Mammary epithelial cell (primary cell): ENCODE measurements at regions of chr18 and their contacts with region 1.

Region 1: GRCh38 chr18:21242141-21242779 is at the start of gene GREB1L:
- DNase-seq: peak; percentile 76
- H3K4me3 ChIP-seq: peak within 1 kb of the TSS; percentile 64 to 67 (median 65)
- H3K27ac ChIP-seq: no peak within 1 kb of the TSS
- H3K4me1 ChIP-seq: peaks cover 6% of the 10 kb centered on the region
- H3K27me3 ChIP-seq: peaks cover 19% of the 10 kb centered on the region
- CTCF ChIP-seq: peak in 1 of 2 donors; percentile 33
- total RNA-seq, gene GREB1L: 1.7 to 2.0 TPM

Region 2: GRCh38 chr18:21099442-21099841 is 142.8 kb before region 1 on chr18:
- CTCF ChIA-PET with region 1: no interaction called
- dilution Hi-C with region 1: no loop called
- in situ Hi-C with region 1: loop called in 1 of 2 experiments (anchors 25 kb)
- intact Hi-C with region 1: no loop called
- DNase-seq: no peak
- H3K4me3 ChIP-seq: no peak overlapping the region
- H3K27ac ChIP-seq: no peak overlapping the region
- H3K4me1 ChIP-seq: no peaks in the 10 kb centered on the region
- H3K27me3 ChIP-seq: no peaks in the 10 kb centered on the region
- CTCF ChIP-seq: no peak

Region 3: DNA sequence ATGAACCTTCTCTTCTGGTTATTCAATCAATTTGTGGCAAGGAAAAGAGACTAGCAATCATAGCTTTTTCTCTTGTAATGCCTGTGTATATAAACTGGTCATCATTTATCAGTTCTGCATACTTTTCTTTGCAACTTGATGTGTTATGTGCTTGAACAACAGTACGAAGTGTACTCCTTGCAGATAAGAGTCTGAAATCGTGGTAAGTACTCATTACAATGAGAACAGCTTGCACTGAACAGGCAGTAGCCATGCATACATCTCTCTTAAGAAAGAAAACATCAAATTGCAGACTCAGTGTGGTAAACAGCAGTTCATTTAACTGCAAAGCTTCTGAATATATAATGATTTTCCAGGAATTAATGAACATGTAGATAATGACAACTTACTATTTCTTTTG is 64.1 kb after region 1 on chr18:
- CTCF ChIA-PET with region 1: no interaction called
- dilution Hi-C with region 1: no loop called
- in situ Hi-C with region 1: no loop called
- intact Hi-C with region 1: no loop called
- DNase-seq: no peak
- H3K4me3 ChIP-seq: no peak overlapping the region
- H3K27ac ChIP-seq: no peak overlapping the region
- H3K4me1 ChIP-seq: peaks cover 7% of the 10 kb centered on the region
- H3K27me3 ChIP-seq: no peaks in the 10 kb centered on the region
- CTCF ChIP-seq: no peak

Region 4: GRCh38 chr18:21444465-21445023 is 202.3 kb after region 1 on chr18:
- CTCF ChIA-PET with region 1: no interaction called
- dilution Hi-C with region 1: no loop called
- in situ Hi-C with region 1: no loop called
- intact Hi-C with region 1: loop called (anchors 1 kb)
- DNase-seq: peak; percentile 48
- H3K4me3 ChIP-seq: no peak overlapping the region
- H3K27ac ChIP-seq: no peak overlapping the region
- H3K4me1 ChIP-seq: peaks cover 3% of the 10 kb centered on the region
- H3K27me3 ChIP-seq: no peaks in the 10 kb centered on the region
- CTCF ChIP-seq: peak; percentile 81 to 87